CD8-positive, alpha-beta memory T cell (primary cell): ENCODE measurements at regions of chr2 and their contacts with region 1.

Region 1: DNA sequence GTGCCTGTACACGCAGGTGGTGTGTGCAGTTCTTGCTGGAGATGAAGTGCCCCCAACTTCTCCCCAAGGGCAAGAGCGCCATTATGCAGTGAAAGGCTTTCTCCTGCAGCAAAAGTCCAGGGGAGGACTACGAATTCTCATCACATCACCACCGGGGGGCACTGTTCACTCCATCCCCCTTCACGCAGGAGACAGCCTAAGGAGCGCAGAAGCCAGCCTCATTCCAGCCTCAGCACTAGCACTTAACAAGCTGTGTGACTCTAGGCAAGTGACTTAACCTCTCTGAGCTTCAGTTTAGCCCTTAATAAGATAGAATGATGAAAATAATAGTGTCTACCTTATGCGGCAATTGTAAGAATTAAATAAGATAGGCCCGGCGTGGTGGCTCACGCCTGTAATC is 32.3 kb downstream of the DNMT3A start:
- DNase-seq: peak; percentile 40 to 75 (median 45)
- H3K4me3 ChIP-seq: no peak overlapping the region
- H3K4me3 Mint-ChIP-seq: peak overlapping the region in 2 of 7 donors; percentile 59 to 61
- H3K27ac ChIP-seq: no peak overlapping the region
- H3K27ac Mint-ChIP-seq: peak overlapping the region; percentile 11 to 99 (median 74)
- H3K4me1 ChIP-seq: peaks cover 78% of the 10 kb centered on the region
- H3K4me1 Mint-ChIP-seq: peaks cover 72 to 94% (median 75%) of the 10 kb centered on the region in 3 donors
- H3K27me3 ChIP-seq: no peaks in the 10 kb centered on the region
- H3K27me3 Mint-ChIP-seq: no peaks in the 10 kb centered on the region

Region 2: GRCh38 chr2:25323042-25323514 is 13.7 kb after region 1 on chr2:
- CTCF ChIA-PET with region 1: interaction called, 10 read pairs
- POLR2A ChIA-PET with region 1: interaction called, 8 read pairs
- DNase-seq: peak in 4 of 5 donors; percentile 50 to 86 (median 60)
- H3K4me3 ChIP-seq: peak overlapping the region; percentile 55
- H3K4me3 Mint-ChIP-seq: peak overlapping the region; percentile 74 to 97 (median 89)
- H3K27ac ChIP-seq: peak overlapping the region; percentile 28
- H3K27ac Mint-ChIP-seq: peak overlapping the region; percentile 81 to 97 (median 94)
- H3K4me1 ChIP-seq: peaks cover 23% of the 10 kb centered on the region
- H3K4me1 Mint-ChIP-seq: peaks cover 41 to 55% (median 46%) of the 10 kb centered on the region in 3 donors
- H3K27me3 ChIP-seq: no peaks in the 10 kb centered on the region
- H3K27me3 Mint-ChIP-seq: no peaks in the 10 kb centered on the region